BJ (cell line): ENCODE measurements at regions of chr1 and their contacts with region 1.

Region 1: GRCh38 chr1:23394684-23395083 is 25.0 kb upstream of the ZNF436 start:
- DNase-seq: peak; percentile 62
- H3K4me3 ChIP-seq: no peak overlapping the region
- H3K27me3 ChIP-seq: no peaks in the 10 kb centered on the region
- CTCF ChIP-seq: peak; percentile 42

Region 2: GRCh38 chr1:23322770-23323169 is 71.9 kb before region 1 on chr1:
- CTCF ChIA-PET with region 1: no interaction called
- POLR2A ChIA-PET with region 1: no interaction called
- DNase-seq: no peak
- H3K4me3 ChIP-seq: no peak overlapping the region
- H3K27me3 ChIP-seq: no peaks in the 10 kb centered on the region
- CTCF ChIP-seq: no peak

Region 3: GRCh38 chr1:23344111-23344986 is 50.3 kb before region 1 on chr1 and contains the start of gene HNRNPR:
- CTCF ChIA-PET with region 1: no interaction called
- POLR2A ChIA-PET with region 1: interaction called, 15 read pairs
- DNase-seq: peak; percentile 99
- H3K4me3 ChIP-seq: peak within 1 kb of the TSS; percentile 76
- H3K27me3 ChIP-seq: no peaks in the 10 kb centered on the region
- CTCF ChIP-seq: 0 out of 2 replicates have a peak, but pooled peaks have one; percentile 13
- polyA plus RNA-seq, gene HNRNPR: 79.3 and 106 TPM in 2 replicates